Right lobe of liver (tissue), 6 donors: ENCODE measurements at regions of chr16 and their contacts with region 1.

Region 1: GRCh38 chr16:2016407-2016922 is 3.1 kb upstream of the NPW start:
- DNase-seq: no peak
- ATAC-seq: peak in 1 of 4 donors; percentile 26
- H3K4me3 ChIP-seq: no peak overlapping the region
- H3K27ac ChIP-seq: no peak overlapping the region
- H3K4me1 ChIP-seq: peaks cover 0 to 13% (median 0%) of the 10 kb centered on the region in 4 donors
- H3K27me3 ChIP-seq: no peaks in the 10 kb centered on the region
- CTCF ChIP-seq: peak in 3 of 4 donors; percentile 9 to 25 (median 12)
- POLR2A ChIP-seq: no peak

Region 2: DNA sequence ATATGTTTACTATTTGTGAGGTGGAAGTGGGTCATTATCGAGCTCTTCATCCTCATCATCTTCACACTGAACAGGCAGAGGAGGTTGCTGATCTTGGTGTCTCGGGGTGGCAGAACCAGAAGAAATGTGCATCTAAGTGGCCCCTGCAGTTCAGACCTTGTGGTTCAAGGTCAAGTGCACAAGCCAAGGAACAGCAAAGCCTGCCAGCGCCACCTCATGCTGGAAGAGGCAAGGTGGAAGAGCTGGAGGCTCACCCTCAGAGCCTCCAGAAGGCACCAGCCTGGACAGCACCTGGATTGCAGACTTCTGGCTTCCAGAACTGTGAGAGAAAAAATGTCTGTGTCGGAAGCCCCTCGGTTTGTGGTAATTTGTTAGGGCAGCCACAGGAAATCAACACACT is 437.3 kb before region 1 on chr16:
- intact Hi-C with region 1: no loop called
- DNase-seq: no peak
- ATAC-seq: no peak
- H3K4me3 ChIP-seq: no peak overlapping the region
- H3K27ac ChIP-seq: no peak overlapping the region
- H3K4me1 ChIP-seq: no peaks in the 10 kb centered on the region
- H3K27me3 ChIP-seq: no peaks in the 10 kb centered on the region
- CTCF ChIP-seq: no peak
- POLR2A ChIP-seq: no peak

Region 3: DNA sequence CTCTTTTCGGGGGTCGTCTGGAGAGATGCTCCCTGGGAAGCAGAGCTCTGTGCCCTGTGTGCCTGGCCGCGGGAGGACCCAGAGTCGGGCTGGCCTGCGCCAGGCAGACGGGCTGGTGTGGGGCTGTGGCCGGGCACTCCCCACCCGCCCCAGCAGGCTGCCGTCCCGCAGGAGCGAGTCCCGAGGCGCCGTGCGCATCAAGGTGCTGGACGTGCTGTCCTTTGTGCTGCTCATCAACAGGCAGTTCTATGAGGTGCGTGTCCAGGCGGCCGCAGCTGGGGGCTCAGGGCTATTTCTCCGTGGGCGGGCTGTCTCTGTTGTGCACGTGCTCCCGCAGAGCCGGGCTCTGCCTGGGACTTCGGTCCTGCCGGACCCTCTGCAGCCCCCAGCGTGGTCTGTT is 46.3 kb after region 1 on chr16:
- intact Hi-C with region 1: loop called in 1 of 2 experiments (anchors 5 kb)
- DNase-seq: no peak
- ATAC-seq: no peak
- H3K4me3 ChIP-seq: no peak overlapping the region
- H3K27ac ChIP-seq: no peak overlapping the region
- H3K4me1 ChIP-seq: peaks cover 0 to 8% (median 4%) of the 10 kb centered on the region in 4 donors
- H3K27me3 ChIP-seq: no peaks in the 10 kb centered on the region
- CTCF ChIP-seq: no peak
- POLR2A ChIP-seq: no peak